ENCODE measurements at regions of chrX and their contacts with region 1.

Region 1: GRCh38 chrX:19625612-19626011 is 110.3 kb upstream of the MAP3K15 start:
- DNase-seq: no peak
- ATAC-seq: no peak
- H3K4me3 ChIP-seq: no peak overlapping the region
- H3K27ac ChIP-seq: no peak overlapping the region
- H3K4me1 ChIP-seq: no peaks in the 10 kb centered on the region
- H3K27me3 ChIP-seq: no peaks in the 10 kb centered on the region
- CTCF ChIP-seq: no peak
- POLR2A ChIP-seq: no peak

Region 2: DNA sequence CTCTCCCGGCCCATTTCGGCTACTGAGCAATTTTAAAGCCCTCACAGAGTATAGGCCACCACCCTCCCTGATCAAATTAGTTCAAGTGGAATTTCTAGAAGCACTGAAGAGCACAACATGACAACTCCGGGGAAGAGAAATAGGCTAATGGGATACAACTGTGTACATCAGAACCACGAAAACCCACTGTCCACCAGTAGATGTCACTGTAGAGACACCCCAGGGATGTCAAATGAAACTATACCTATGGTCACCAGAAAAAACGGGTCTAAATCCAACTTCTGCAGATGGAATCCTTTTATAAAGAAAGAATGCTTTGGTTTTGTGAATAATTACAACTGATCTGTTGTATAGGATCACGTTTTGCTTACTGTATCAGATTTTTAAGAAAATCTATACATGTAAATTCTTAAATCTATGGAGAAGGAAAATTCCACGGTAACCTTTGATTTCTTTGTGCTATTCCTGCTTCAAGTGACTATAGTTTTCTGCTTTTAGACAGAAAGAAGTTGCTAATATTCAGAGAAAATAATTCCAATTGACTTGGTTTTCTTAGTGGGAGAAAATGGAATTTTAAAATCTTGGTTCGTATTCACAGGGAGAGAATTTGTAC is 80.8 kb before region 1 on chrX:
- in situ Hi-C with region 1: no loop called
- intact Hi-C with region 1: loop called (anchors 2 kb)
- DNase-seq: no peak
- ATAC-seq: peak in 1 of 2 donors; percentile 74
- H3K4me3 ChIP-seq: no peak overlapping the region
- H3K27ac ChIP-seq: no peak overlapping the region
- H3K4me1 ChIP-seq: no peaks in the 10 kb centered on the region
- H3K27me3 ChIP-seq: no peaks in the 10 kb centered on the region
- CTCF ChIP-seq: peak; percentile 35 to 79 (median 53)
- POLR2A ChIP-seq: no peak

Region 3: GRCh38 chrX:19593690-19594089 is 31.9 kb before region 1 on chrX:
- in situ Hi-C with region 1: no loop called
- intact Hi-C with region 1: loop called (anchors 5 kb)
- DNase-seq: no peak
- ATAC-seq: peak in 1 of 2 donors; percentile 42
- H3K4me3 ChIP-seq: no peak overlapping the region
- H3K27ac ChIP-seq: no peak overlapping the region
- H3K4me1 ChIP-seq: peaks cover 0 to 11% of the 10 kb centered on the region in 2 donors
- H3K27me3 ChIP-seq: no peaks in the 10 kb centered on the region
- CTCF ChIP-seq: peak in 4 of 5 experiments; percentile 20 to 43 (median 30)
- POLR2A ChIP-seq: no peak

Measured in gastrocnemius medialis (tissue), 4 donors.